Activated CD4-positive, alpha-beta T cell treated with anti-CD3 and anti-CD28 coated beads for 36 hours (primary cell): ENCODE measurements at regions of chr9 and their contacts with region 1.

Region 1: DNA sequence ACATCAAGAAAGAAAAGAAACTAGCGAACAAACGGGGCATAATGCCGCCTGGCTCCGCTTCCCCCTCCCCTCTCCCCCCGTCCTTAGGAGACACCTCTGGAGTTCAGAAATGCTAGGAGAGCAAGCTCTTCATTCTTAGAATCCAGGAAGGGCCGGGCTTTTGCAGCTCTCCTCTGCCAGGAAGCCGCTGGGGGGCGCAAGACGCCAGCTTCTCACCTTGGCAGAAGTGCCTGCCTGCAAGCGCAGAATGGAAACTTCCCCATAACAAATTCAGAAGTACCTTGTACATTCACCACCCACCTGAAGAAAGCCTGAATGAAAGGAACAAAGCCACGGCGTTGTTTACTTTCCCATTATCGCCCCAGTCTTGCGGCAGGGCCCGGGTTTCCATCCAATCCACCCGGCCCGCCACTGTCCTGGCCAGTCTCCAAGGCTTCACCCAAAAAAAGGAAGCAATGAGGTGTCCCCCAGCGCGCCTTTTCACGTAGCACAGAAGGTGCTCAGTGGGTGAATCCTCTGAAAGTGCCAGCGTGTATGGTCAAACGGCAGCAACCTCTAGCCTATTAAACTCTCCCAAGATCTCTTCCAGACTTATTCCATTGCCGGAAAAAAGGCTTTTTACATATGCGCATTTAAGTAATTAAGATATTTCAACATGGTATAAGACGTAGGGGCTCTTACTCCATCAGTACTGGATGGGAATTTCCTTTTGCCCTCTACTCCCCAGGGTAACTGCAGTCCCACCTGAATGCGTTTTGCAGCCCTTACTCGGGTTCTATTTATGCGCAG is 1.6 kb upstream of the GADD45G start:
- DNase-seq: peak; percentile 95
- ATAC-seq: peak; percentile 23
- H3K4me3 Mint-ChIP-seq: peak overlapping the region; percentile 66
- H3K27ac Mint-ChIP-seq: no peak overlapping the region
- H3K4me1 Mint-ChIP-seq: peaks cover 33% of the 10 kb centered on the region
- H3K27me3 Mint-ChIP-seq: no peaks in the 10 kb centered on the region

Region 2: GRCh38 chr9:89650549-89650948 is 47.4 kb after region 1 on chr9:
- CTCF ChIA-PET with region 1: no interaction called
- POLR2A ChIA-PET with region 1: no interaction called
- intact Hi-C with region 1: no loop called
- DNase-seq: no peak
- ATAC-seq: no peak
- H3K4me3 Mint-ChIP-seq: no peak overlapping the region
- H3K27ac Mint-ChIP-seq: no peak overlapping the region
- H3K4me1 Mint-ChIP-seq: no peaks in the 10 kb centered on the region
- H3K27me3 Mint-ChIP-seq: no peaks in the 10 kb centered on the region

Region 3: DNA sequence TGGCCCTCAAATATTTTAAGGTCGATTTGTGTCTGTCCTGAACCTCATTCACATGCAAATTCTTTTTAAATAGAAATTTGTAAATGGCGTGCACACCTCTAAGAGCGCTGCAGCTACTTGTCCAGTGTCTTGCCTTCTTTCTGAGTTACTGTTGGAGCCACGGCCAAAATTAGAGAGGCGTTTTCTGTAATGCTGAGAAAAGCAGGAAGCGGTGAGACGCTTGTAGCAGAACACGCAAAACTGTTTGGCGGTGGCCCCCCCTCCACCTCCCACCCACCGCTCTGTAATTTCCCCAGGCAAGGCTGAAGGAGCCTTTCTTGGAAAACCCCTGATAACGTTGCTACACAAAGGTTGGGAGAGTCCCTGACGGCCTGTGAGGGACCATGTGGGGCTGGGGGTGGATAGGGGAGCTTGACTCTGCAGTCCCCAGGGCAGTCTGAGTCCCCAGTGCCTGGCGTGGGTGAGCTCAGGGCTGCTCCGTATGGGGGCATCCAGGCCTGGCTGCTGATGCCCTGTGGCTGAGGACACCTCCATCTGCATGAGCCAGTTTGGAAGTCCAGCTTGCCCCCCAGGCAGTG is 98.1 kb after region 1 on chr9:
- CTCF ChIA-PET with region 1: interaction called, 5 read pairs
- POLR2A ChIA-PET with region 1: no interaction called
- intact Hi-C with region 1: loop called (anchors 1 to 2 kb)
- DNase-seq: peak; percentile 86
- ATAC-seq: peak; percentile 97
- H3K4me3 Mint-ChIP-seq: peak overlapping the region; percentile 65
- H3K27ac Mint-ChIP-seq: peak overlapping the region; percentile 85
- H3K4me1 Mint-ChIP-seq: peaks cover 27% of the 10 kb centered on the region
- H3K27me3 Mint-ChIP-seq: no peaks in the 10 kb centered on the region

Region 4: DNA sequence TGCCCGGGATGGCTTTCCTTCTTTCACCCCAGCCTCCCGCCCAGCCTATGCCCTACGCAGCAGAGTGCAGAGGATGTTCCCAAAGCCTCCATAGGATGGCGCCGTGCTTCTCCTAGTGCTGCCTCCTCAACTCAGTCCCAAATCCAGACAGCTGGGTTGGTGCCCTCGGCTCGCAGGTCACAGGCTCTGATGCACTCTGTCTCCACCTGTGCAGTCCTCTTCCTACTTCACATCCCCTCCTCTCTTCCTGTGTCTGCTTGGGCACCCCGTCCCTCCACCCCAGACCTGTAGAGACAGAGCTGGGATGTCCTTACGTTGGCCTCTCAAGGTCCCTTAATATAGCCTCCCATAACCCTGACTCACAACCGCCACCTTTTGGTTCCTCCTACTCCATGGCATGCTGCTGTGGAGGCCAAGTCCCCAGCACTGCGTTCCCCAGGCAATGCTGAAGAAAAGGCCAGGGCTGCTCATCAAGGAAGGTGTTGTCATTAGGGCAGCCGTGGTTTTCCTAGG is 316.1 kb after region 1 on chr9:
- CTCF ChIA-PET with region 1: interaction called, 7 read pairs
- POLR2A ChIA-PET with region 1: interaction called, 3 read pairs
- intact Hi-C with region 1: loop called (anchors 1 kb)
- DNase-seq: peak; percentile 62
- ATAC-seq: peak; percentile 81
- H3K4me3 Mint-ChIP-seq: no peak overlapping the region
- H3K27ac Mint-ChIP-seq: peak overlapping the region; percentile 59
- H3K4me1 Mint-ChIP-seq: peaks cover 14% of the 10 kb centered on the region
- H3K27me3 Mint-ChIP-seq: peaks cover 10% of the 10 kb centered on the region

Region 5: DNA sequence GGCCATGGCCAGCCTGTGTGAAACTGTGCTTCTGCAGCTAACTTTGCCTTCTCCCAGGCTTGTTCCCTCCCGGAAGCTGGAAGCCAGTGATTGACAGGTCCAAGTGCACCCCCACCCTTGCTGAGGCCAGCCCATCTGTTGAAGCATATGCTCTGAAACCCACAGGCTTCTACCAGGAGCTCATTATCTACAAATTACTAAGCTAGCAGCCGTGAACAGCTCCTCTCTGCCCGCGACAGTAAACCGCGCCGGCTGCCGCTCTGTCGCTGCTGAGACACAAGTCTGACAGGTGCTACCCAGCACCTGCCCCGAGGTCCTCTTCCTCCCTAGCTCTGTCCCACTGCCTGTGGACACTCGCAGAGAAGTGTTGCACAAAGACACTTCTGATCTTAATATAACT is 492.5 kb after region 1 on chr9:
- CTCF ChIA-PET with region 1: interaction called, 114 read pairs
- POLR2A ChIA-PET with region 1: no interaction called
- intact Hi-C with region 1: no loop called
- DNase-seq: peak; percentile 39
- ATAC-seq: peak; percentile 53
- H3K4me3 Mint-ChIP-seq: no peak overlapping the region
- H3K27ac Mint-ChIP-seq: no peak overlapping the region
- H3K4me1 Mint-ChIP-seq: peaks cover 20% of the 10 kb centered on the region
- H3K27me3 Mint-ChIP-seq: peaks cover 15% of the 10 kb centered on the region

Region 6: DNA sequence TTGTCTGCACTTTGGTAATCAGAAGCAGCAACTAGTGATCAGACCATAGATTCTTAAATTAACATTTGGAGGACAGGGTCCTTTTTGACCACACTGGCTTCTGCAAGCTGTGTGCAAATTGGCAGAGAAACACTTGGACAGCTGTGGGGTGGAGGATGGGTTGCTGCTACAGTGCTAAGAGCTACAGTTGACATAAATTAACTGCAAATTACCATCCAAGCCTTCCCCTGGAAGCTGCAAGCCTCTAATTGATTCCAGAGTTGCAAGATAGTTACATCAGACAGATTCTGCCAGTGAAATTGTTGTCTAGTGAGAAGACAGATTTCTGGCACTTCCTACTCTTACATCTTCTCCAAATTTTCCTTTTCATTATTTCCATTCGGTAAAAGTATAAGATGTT is 521.8 kb after region 1 on chr9:
- CTCF ChIA-PET with region 1: interaction called, 10 read pairs
- POLR2A ChIA-PET with region 1: no interaction called
- intact Hi-C with region 1: no loop called
- DNase-seq: no peak
- ATAC-seq: no peak
- H3K4me3 Mint-ChIP-seq: no peak overlapping the region
- H3K27ac Mint-ChIP-seq: no peak overlapping the region
- H3K4me1 Mint-ChIP-seq: no peaks in the 10 kb centered on the region
- H3K27me3 Mint-ChIP-seq: peaks cover 10% of the 10 kb centered on the region